ENCODE measurements at regions of chr7 and their contacts with region 1.

Region 1: DNA sequence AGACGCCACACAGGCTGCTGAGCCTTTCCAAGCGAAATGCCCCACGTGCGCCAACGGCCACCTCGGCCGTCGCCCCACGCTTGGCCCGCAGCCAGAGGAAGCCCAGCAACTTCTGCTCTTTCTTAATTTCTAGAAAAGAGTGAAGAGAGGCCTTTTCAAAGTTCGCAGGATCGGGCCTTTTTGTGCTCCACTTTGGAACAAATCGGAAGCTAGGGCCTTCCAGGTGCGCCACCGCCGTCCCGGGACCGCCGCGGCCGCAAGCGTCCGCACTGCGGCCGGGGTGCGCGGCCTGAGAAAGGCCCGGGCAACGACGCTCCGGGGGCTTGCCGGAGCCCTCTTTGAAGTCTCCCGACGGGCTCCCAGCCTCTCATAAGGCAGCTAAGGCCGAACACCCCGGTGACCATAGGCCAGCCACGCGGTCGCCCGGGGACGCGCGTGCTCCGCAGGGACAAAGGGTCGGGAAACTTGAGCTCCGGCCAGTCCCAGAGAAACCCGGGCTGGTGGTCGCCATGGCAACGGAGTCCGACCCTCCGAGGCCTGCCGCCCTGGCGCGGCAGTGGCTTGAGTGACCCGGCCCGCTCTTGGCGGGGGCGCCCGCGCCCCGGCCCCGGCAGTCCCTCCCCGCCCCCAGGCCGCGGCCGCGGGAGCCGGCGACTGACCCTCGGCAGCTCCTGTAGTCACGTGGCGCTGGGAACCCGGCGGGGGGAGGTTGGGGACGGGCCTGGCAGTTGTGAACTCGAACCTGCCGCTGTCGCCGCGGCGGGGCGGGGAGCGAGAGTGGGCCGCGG is at the start of gene REPIN1:
- DNase-seq: peak; percentile 80
- ATAC-seq: peak; percentile 67
- H3K4me3 ChIP-seq: peak within 1 kb of the TSS; percentile 76
- H3K27ac ChIP-seq: peak within 1 kb of the TSS; percentile 98
- H3K4me1 ChIP-seq: peaks cover 13 to 24% of the 10 kb centered on the region in 2 experiments
- H3K27me3 ChIP-seq: no peaks in the 10 kb centered on the region
- CTCF ChIP-seq: no peak
- POLR2A ChIP-seq: peak; percentile 28
- RAD21 ChIP-seq: no peak; the same call in 1 of the 2 replicates
- total RNA-seq, gene REPIN1: 106 TPM

Region 2: GRCh38 chr7:150307904-150308303 is 60.4 kb before region 1 on chr7:
- CTCF ChIA-PET with region 1: no interaction called
- POLR2A ChIA-PET with region 1: no interaction called
- RAD21 ChIA-PET with region 1: no interaction called
- intact Hi-C with region 1: loop called (anchors 10 kb)
- DNase-seq: no peak
- ATAC-seq: peak; percentile 76
- H3K4me3 ChIP-seq: peak overlapping the region in 1 of 2 experiments; percentile 23; a peak in 1 of 4 replicates
- H3K27ac ChIP-seq: no peak overlapping the region
- H3K4me1 ChIP-seq: peaks cover 9 to 32% of the 10 kb centered on the region in 2 experiments
- H3K27me3 ChIP-seq: no peaks in the 10 kb centered on the region
- CTCF ChIP-seq: no peak
- POLR2A ChIP-seq: no peak
- RAD21 ChIP-seq: no peak

Region 3: GRCh38 chr7:150378853-150379440 is 10.7 kb after region 1 on chr7 and contains the start of gene ZNF775:
- CTCF ChIA-PET with region 1: no interaction called
- POLR2A ChIA-PET with region 1: interaction called, 15 read pairs
- RAD21 ChIA-PET with region 1: interaction called in 1 of 2 experiments, 3 read pairs
- intact Hi-C with region 1: no loop called
- DNase-seq: peak; percentile 85
- ATAC-seq: peak; percentile 96
- H3K4me3 ChIP-seq: peak within 1 kb of the TSS; percentile 66 to 88
- H3K27ac ChIP-seq: peak within 1 kb of the TSS; percentile 78
- H3K4me1 ChIP-seq: peaks cover 15 to 24% of the 10 kb centered on the region in 2 experiments
- H3K27me3 ChIP-seq: no peaks in the 10 kb centered on the region
- CTCF ChIP-seq: no peak
- POLR2A ChIP-seq: peak; percentile 60
- RAD21 ChIP-seq: no peak
- total RNA-seq, gene ZNF775: 4.5 TPM

Region 4: DNA sequence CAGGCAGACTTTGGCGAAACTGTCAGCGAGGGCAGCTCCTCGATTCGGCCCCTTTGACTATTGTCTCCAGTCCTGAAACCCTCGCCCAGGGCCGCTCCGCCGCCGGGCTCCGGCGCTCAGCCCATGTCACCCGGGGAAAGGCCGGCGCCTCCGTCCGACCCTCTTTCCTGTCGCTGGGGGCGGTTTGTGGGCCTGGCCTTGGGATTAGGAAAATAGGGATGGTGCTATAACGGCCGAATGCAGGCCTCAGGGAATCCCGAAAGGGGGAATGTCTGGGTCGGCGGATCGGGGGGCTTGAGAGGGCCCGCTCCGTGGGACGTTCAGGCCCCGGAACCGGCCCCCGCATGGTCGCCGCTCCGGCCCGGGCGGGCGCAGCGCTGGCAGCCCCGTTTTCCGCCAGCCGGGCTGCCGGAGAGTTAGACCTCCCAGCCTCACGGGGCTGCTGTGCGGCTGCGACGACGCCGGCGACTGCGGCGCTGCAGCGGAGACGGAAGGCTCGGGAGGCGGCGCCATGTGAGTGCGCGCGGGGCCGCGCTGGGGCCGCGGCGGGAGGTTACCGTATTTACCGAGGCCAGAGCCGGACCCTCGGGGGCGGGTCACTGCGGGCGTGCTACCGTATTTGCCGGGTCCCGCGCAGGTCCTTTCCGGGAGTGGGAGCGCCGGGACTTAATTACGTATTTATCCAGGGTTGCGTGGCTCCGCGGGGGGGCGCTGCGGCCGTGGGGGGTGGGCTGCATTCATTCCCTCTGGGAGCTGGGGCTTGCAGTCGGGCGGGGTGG is 36.7 kb after region 1 on chr7:
- CTCF ChIA-PET with region 1: no interaction called
- POLR2A ChIA-PET with region 1: interaction called, 5 read pairs
- RAD21 ChIA-PET with region 1: interaction called in 1 of 2 experiments, 3 read pairs
- intact Hi-C with region 1: loop called (anchors 5 kb)
- DNase-seq: peak; percentile 60
- ATAC-seq: peak; percentile 88
- H3K4me3 ChIP-seq: peak overlapping the region; percentile 48 to 64
- H3K27ac ChIP-seq: peak overlapping the region; percentile 56
- H3K4me1 ChIP-seq: peaks cover 19 to 40% of the 10 kb centered on the region in 2 experiments
- H3K27me3 ChIP-seq: no peaks in the 10 kb centered on the region
- CTCF ChIP-seq: peak in 2 of 3 experiments; percentile 24 to 49; a peak in 3 of 6 replicates
- POLR2A ChIP-seq: peak; percentile 46
- RAD21 ChIP-seq: no peak

Region 5: GRCh38 chr7:150556521-150557138 is 188.3 kb after region 1 on chr7:
- CTCF ChIA-PET with region 1: no interaction called
- POLR2A ChIA-PET with region 1: no interaction called
- RAD21 ChIA-PET with region 1: no interaction called
- intact Hi-C with region 1: no loop called
- DNase-seq: no peak
- ATAC-seq: no peak
- H3K4me3 ChIP-seq: no peak overlapping the region
- H3K27ac ChIP-seq: no peak overlapping the region
- H3K4me1 ChIP-seq: no peaks in the 10 kb centered on the region
- H3K27me3 ChIP-seq: no peaks in the 10 kb centered on the region
- CTCF ChIP-seq: no peak
- POLR2A ChIP-seq: no peak
- RAD21 ChIP-seq: no peak

Region 6: DNA sequence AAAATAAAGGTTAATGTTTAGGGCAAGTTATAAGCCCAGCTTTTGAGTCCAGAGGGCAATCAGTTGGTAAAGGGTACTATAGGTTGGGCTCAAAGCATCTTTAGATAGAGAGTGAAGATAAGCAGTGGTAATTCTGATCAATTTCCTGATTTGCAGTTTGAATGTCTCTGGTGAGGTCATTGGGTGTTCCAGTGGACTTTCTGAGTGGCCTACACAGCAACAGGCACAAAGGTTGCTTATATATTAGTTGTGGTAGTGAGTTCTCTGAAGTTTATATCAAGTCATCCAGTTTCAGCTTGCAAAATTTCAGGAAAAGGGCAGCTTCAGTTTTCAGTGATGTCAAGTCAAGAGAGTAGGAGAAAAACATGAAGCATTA is 398.0 kb after region 1 on chr7:
- CTCF ChIA-PET with region 1: no interaction called
- POLR2A ChIA-PET with region 1: no interaction called
- RAD21 ChIA-PET with region 1: no interaction called
- intact Hi-C with region 1: no loop called
- DNase-seq: no peak
- ATAC-seq: no peak
- H3K4me3 ChIP-seq: no peak overlapping the region
- H3K27ac ChIP-seq: no peak overlapping the region
- H3K4me1 ChIP-seq: no peaks in the 10 kb centered on the region
- H3K27me3 ChIP-seq: peaks cover 12% of the 10 kb centered on the region; the same call in 1 of the 2 replicates
- CTCF ChIP-seq: no peak
- POLR2A ChIP-seq: no peak
- RAD21 ChIP-seq: no peak